ENCODE measurements at regions of chr19 and their contacts with region 1.

Region 1: GRCh38 chr19:8412783-8413628 is at the start of gene MARCHF2:
- DNase-seq: peak; percentile 99
- ATAC-seq: peak; percentile 100
- H3K4me3 ChIP-seq: peak within 1 kb of the TSS; percentile 79
- H3K27ac ChIP-seq: no peak within 1 kb of the TSS
- H3K4me1 ChIP-seq: peaks cover 6% of the 10 kb centered on the region
- H3K27me3 ChIP-seq: no peaks in the 10 kb centered on the region
- CTCF ChIP-seq: peak; percentile 68
- total RNA-seq, gene MARCHF2: 58.6 and 58.7 TPM in 2 replicates

Region 2: DNA sequence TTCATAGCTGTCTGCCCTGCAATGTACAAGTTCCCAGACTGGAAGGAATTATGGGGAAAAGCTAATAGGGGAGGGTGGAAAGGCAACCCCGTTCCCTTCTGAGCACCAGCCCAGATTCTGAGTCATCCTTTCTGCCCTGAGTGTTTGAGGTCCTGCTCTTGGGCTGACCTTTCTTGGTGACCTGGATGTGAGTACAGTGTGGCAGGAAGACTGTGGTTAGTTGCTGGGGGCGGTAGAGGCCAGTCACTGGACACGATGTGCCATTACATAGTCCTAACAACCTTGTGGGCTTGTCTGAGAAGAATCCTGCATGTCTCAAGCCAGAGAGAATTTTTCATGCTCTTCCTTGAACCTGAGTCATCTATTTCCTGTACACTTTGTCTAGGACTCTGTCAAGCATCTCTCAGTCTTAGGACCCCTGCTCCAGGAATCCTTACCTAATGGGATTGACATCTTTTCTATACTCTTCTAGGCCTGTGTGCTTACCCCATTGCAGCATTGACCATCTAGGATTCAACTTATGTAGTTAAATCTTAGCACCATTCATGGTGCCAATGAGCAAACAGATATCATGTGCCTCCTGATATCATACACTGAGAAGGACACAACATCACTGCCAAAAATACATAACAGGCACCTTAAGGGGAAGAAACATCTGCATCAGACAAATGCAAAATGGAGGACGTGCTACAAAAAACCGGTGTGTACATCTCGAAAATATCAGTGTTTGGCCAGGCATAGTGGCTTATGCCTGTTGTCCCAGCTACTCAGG is 57.2 kb before region 1 on chr19:
- CTCF ChIA-PET with region 1: interaction called, 30 read pairs
- POLR2A ChIA-PET with region 1: no interaction called
- intact Hi-C with region 1: no loop called
- DNase-seq: peak; percentile 97
- ATAC-seq: peak; percentile 93
- H3K4me3 ChIP-seq: no peak overlapping the region
- H3K27ac ChIP-seq: peak overlapping the region; percentile 50
- H3K4me1 ChIP-seq: peaks cover 21% of the 10 kb centered on the region
- H3K27me3 ChIP-seq: no peaks in the 10 kb centered on the region
- CTCF ChIP-seq: 0 out of 2 replicates have a peak, but pooled peaks have one; percentile 19

Region 3: GRCh38 chr19:8423817-8424223 is 10.8 kb after region 1 on chr19:
- CTCF ChIA-PET with region 1: interaction called, 18 read pairs
- POLR2A ChIA-PET with region 1: interaction called, 12 read pairs
- intact Hi-C with region 1: no loop called
- DNase-seq: peak; percentile 96
- ATAC-seq: peak; percentile 98
- H3K4me3 ChIP-seq: peak overlapping the region; percentile 49; the same call in 1 of the 2 replicates
- H3K27ac ChIP-seq: peak overlapping the region; percentile 36
- H3K4me1 ChIP-seq: peaks cover 15% of the 10 kb centered on the region
- H3K27me3 ChIP-seq: no peaks in the 10 kb centered on the region
- CTCF ChIP-seq: no peak

Region 4: GRCh38 chr19:8459520-8460259 is 46.7 kb after region 1 on chr19:
- CTCF ChIA-PET with region 1: interaction called, 7 read pairs
- POLR2A ChIA-PET with region 1: no interaction called
- intact Hi-C with region 1: loop called (anchors 5 kb)
- DNase-seq: peak; percentile 84
- ATAC-seq: peak; percentile 88
- H3K4me3 ChIP-seq: peak overlapping the region; percentile 9
- H3K27ac ChIP-seq: peak overlapping the region; percentile 7
- H3K4me1 ChIP-seq: peaks cover 43% of the 10 kb centered on the region
- H3K27me3 ChIP-seq: no peaks in the 10 kb centered on the region
- CTCF ChIP-seq: no peak

Region 5: GRCh38 chr19:8513687-8514504 is 100.9 kb after region 1 on chr19 and contains the start of gene ZNF414:
- CTCF ChIA-PET with region 1: interaction called, 9 read pairs
- POLR2A ChIA-PET with region 1: interaction called, 11 read pairs
- intact Hi-C with region 1: no loop called
- DNase-seq: peak; percentile 98
- ATAC-seq: peak; percentile 95
- H3K4me3 ChIP-seq: peak within 1 kb of the TSS; percentile 78
- H3K27ac ChIP-seq: peak within 1 kb of the TSS; percentile 91
- H3K4me1 ChIP-seq: peaks cover 9% of the 10 kb centered on the region
- H3K27me3 ChIP-seq: no peaks in the 10 kb centered on the region
- CTCF ChIP-seq: no peak
- total RNA-seq, gene ZNF414: 4.6 and 4.7 TPM in 2 replicates

Measured in PC-3 (cell line).